ENCODE measurements at regions of chr9 and their contacts with region 1.

Region 1: DNA sequence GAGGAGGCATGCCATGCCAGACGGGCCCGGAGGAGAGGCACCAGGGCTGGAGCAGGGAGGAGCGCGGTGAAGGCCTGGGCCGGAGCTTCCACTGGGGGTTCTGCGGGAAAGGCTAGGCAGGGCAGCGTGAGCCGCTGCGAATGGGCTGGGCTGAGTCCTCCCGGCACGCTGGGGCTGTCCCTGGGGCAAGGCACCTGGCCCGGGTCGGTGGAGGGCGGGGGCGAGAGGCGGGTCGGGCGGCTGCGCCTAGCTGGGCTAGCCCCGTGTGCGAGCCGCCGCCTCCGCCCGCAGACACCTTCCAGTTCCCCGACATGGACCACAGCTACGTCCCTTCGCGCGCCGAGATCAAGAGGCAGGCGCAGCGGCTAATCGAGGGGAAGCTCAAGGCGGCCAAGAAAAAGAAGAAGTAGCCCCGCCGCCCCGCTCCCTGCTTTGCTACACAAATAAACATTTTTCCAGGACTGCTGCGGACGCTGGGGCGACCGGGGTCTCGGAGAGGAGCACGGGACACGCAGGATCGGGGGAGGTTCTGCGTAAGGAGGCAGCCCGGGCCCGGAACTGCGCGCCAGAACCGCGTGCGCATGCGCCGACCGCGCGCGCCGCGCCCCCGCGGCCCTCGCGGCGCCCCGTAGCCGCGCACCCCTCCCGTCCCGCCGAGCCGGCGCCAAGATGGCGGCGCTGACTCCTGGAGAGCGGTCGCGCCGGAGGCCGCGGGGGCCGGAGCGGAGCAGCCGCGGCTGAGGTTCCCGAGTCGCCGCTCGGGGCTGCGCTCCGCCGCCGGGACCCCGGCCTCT is at the start of gene RABL6:
- DNase-seq: peak; percentile 70 to 92 (median 86)
- ATAC-seq: peak; percentile 95
- H3K4me3 ChIP-seq: peak within 1 kb of the TSS; percentile 69
- H3K4me3 Mint-ChIP-seq: peak within 1 kb of the TSS; percentile 78 to 92 (median 90)
- H3K27ac ChIP-seq: peak within 1 kb of the TSS; percentile 94
- H3K27ac Mint-ChIP-seq: peak within 1 kb of the TSS; percentile 76 to 95 (median 90)
- H3K4me1 ChIP-seq: peaks cover 20 to 32% of the 10 kb centered on the region in 2 donors
- H3K4me1 Mint-ChIP-seq: peaks cover 22 to 52% (median 33%) of the 10 kb centered on the region in 7 donors
- H3K27me3 ChIP-seq: no peaks in the 10 kb centered on the region
- H3K27me3 Mint-ChIP-seq: peaks cover 0 to under 1% (median 0%) of the 10 kb centered on the region in 5 donors
- total RNA-seq, gene RABL6: 59.6 to 100 (median 60.9) TPM

Region 2: DNA sequence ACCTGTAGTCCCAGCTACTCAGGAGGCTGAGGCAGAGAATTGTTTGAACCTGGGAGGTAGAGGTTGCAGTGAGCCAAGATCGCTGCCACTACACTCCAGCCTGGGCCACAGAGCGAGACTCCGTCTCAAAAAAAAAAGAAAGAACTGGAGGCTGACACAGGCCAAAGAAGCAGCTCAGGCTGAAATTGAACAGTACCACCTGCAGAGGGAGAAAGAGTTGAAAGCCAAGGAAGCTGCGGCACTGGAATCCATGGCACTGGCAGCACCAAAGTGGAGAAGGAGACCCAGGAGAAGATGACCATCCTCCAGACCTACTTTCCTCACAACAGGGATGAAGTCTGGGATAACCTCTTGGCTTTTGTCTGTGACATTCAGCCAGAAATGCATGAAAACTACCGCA is 27.7 kb before region 1 on chr9:
- CTCF ChIA-PET with region 1: no interaction called
- POLR2A ChIA-PET with region 1: no interaction called
- intact Hi-C with region 1: no loop called
- DNase-seq: no peak
- ATAC-seq: no peak
- H3K4me3 ChIP-seq: no peak overlapping the region
- H3K4me3 Mint-ChIP-seq: no peak overlapping the region
- H3K27ac ChIP-seq: no peak overlapping the region
- H3K27ac Mint-ChIP-seq: no peak overlapping the region
- H3K4me1 ChIP-seq: no peaks in the 10 kb centered on the region
- H3K4me1 Mint-ChIP-seq: peaks cover 0 to 6% (median 0%) of the 10 kb centered on the region in 7 donors
- H3K27me3 ChIP-seq: no peaks in the 10 kb centered on the region
- H3K27me3 Mint-ChIP-seq: peaks cover 5 to 50% (median 13%) of the 10 kb centered on the region in 5 donors

Region 3: GRCh38 chr9:136826703-136827582 is 19.5 kb after region 1 on chr9:
- CTCF ChIA-PET with region 1: no interaction called
- POLR2A ChIA-PET with region 1: no interaction called
- intact Hi-C with region 1: loop called in 1 of 2 experiments (anchors 2 kb)
- DNase-seq: no peak
- ATAC-seq: no peak
- H3K4me3 ChIP-seq: no peak overlapping the region
- H3K4me3 Mint-ChIP-seq: no peak overlapping the region
- H3K27ac ChIP-seq: no peak overlapping the region
- H3K27ac Mint-ChIP-seq: no peak overlapping the region
- H3K4me1 ChIP-seq: no peaks in the 10 kb centered on the region
- H3K4me1 Mint-ChIP-seq: peaks cover 0 to under 1% (median 0%) of the 10 kb centered on the region in 7 donors
- H3K27me3 ChIP-seq: no peaks in the 10 kb centered on the region
- H3K27me3 Mint-ChIP-seq: no peaks in the 10 kb centered on the region

Region 4: DNA sequence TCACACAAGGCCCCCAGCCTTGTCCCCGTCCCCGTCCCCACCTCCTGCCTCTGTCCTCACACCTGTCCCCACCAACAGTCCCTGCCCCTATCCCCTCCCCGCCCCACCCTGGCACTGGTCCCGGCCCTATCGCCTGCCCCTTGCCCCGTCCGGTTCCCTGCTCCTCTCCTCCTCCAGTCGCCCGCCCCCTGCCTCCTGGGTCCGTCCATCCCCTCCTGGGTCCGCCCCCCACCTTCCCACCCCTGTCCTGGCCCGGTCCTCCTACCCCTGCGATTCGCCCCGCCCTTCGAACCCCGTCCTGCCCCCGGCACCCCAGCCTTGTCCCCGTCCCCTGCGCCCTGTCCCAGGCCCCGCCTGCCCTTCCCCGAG is 58.2 kb after region 1 on chr9:
- CTCF ChIA-PET with region 1: no interaction called
- POLR2A ChIA-PET with region 1: no interaction called
- intact Hi-C with region 1: loop called in 1 of 2 experiments (anchors 2 kb)
- DNase-seq: no peak
- ATAC-seq: no peak
- H3K4me3 ChIP-seq: peak overlapping the region; percentile 68
- H3K4me3 Mint-ChIP-seq: peak overlapping the region; percentile 55 to 94 (median 87)
- H3K27ac ChIP-seq: peak overlapping the region; percentile 99
- H3K27ac Mint-ChIP-seq: peak overlapping the region; percentile 36 to 94 (median 87)
- H3K4me1 ChIP-seq: peaks cover 7 to 8% of the 10 kb centered on the region in 2 donors
- H3K4me1 Mint-ChIP-seq: peaks cover 4 to 24% (median 19%) of the 10 kb centered on the region in 7 donors
- H3K27me3 ChIP-seq: no peaks in the 10 kb centered on the region
- H3K27me3 Mint-ChIP-seq: no peaks in the 10 kb centered on the region

Region 5: GRCh38 chr9:137108608-137109249 is 301.3 kb after region 1 on chr9:
- CTCF ChIA-PET with region 1: no interaction called
- POLR2A ChIA-PET with region 1: no interaction called
- intact Hi-C with region 1: no loop called
- DNase-seq: no peak
- ATAC-seq: no peak
- H3K4me3 ChIP-seq: no peak overlapping the region
- H3K4me3 Mint-ChIP-seq: no peak overlapping the region
- H3K27ac ChIP-seq: no peak overlapping the region
- H3K27ac Mint-ChIP-seq: no peak overlapping the region
- H3K4me1 ChIP-seq: peaks cover 0 to 4% of the 10 kb centered on the region in 2 donors
- H3K4me1 Mint-ChIP-seq: peaks cover 0 to 11% (median 5%) of the 10 kb centered on the region in 7 donors
- H3K27me3 ChIP-seq: no peaks in the 10 kb centered on the region
- H3K27me3 Mint-ChIP-seq: no peaks in the 10 kb centered on the region

Measured in naive thymus-derived CD4-positive, alpha-beta T cell (primary cell).